Naive thymus-derived CD4-positive, alpha-beta T cell (primary cell): ENCODE measurements at regions of chr1 and their contacts with region 1.

Region 1: DNA sequence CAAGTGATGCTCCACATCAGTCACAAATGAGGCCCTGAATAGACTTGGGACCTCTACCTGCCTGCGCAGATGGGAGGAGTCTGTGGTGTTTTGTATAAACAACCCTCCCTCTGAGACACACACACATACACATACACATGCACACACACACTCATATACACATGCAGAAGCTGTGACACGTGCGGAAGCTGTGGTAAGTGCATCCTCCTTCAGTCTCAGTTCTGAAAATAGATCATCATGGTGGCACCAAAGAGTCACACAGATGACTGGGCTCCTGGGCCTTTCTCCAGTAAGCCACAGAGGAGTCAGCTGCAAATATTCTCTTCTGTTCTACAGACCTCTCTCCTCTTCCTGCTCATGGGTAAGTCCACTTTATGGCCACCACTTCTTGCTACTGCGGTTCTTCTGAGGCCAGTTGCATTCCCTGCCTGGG is at the start of gene LY9:
- DNase-seq: peak; percentile 28 to 97 (median 94)
- ATAC-seq: peak; percentile 96
- H3K4me3 ChIP-seq: peak within 1 kb of the TSS; percentile 66
- H3K4me3 Mint-ChIP-seq: peak within 1 kb of the TSS; percentile 86 to 99 (median 98)
- H3K27ac ChIP-seq: peak within 1 kb of the TSS; percentile 83
- H3K27ac Mint-ChIP-seq: peak within 1 kb of the TSS; percentile 91 to 99 (median 99)
- H3K4me1 ChIP-seq: peaks cover 22 to 29% of the 10 kb centered on the region in 2 donors
- H3K4me1 Mint-ChIP-seq: peaks cover 31 to 66% (median 48%) of the 10 kb centered on the region in 7 donors
- H3K27me3 ChIP-seq: no peaks in the 10 kb centered on the region
- H3K27me3 Mint-ChIP-seq: peaks cover 0 to 21% (median 0%) of the 10 kb centered on the region in 5 donors
- total RNA-seq, gene LY9: 5.6 to 141 (median 105) TPM

Region 2: GRCh38 chr1:160629286-160630210 is 166.4 kb before region 1 on chr1:
- CTCF ChIA-PET with region 1: no interaction called
- POLR2A ChIA-PET with region 1: no interaction called
- intact Hi-C with region 1: loop called in 1 of 2 experiments (anchors 2 kb)
- DNase-seq: peak; percentile 29 to 95 (median 93)
- ATAC-seq: peak; percentile 88
- H3K4me3 ChIP-seq: peak overlapping the region; percentile 56
- H3K4me3 Mint-ChIP-seq: peak overlapping the region; percentile 80 to 99 (median 86)
- H3K27ac ChIP-seq: peak overlapping the region; percentile 95
- H3K27ac Mint-ChIP-seq: peak overlapping the region; percentile 86 to 100 (median 100)
- H3K4me1 ChIP-seq: peaks cover 95 to 96% of the 10 kb centered on the region in 2 donors
- H3K4me1 Mint-ChIP-seq: peaks cover 72 to 100% (median 97%) of the 10 kb centered on the region in 7 donors
- H3K27me3 ChIP-seq: no peaks in the 10 kb centered on the region
- H3K27me3 Mint-ChIP-seq: no peaks in the 10 kb centered on the region

Region 3: GRCh38 chr1:160726498-160727315 is 69.3 kb before region 1 on chr1:
- CTCF ChIA-PET with region 1: interaction called, 8 read pairs
- POLR2A ChIA-PET with region 1: no interaction called
- intact Hi-C with region 1: loop called in 1 of 2 experiments (anchors 2 kb)
- DNase-seq: peak in 8 of 9 donors; percentile 57 to 80 (median 73)
- ATAC-seq: peak; percentile 97
- H3K4me3 ChIP-seq: no peak overlapping the region
- H3K4me3 Mint-ChIP-seq: no peak overlapping the region
- H3K27ac ChIP-seq: no peak overlapping the region
- H3K27ac Mint-ChIP-seq: no peak overlapping the region
- H3K4me1 ChIP-seq: peaks cover 15 to 21% of the 10 kb centered on the region in 2 donors
- H3K4me1 Mint-ChIP-seq: peaks cover 12 to 29% (median 16%) of the 10 kb centered on the region in 7 donors
- H3K27me3 ChIP-seq: no peaks in the 10 kb centered on the region
- H3K27me3 Mint-ChIP-seq: no peaks in the 10 kb centered on the region

Region 4: GRCh38 chr1:160777486-160778089 is 18.4 kb before region 1 on chr1:
- CTCF ChIA-PET with region 1: interaction called, 18 read pairs
- POLR2A ChIA-PET with region 1: interaction called, 8 read pairs
- intact Hi-C with region 1: loop called (anchors 1 kb)
- DNase-seq: peak in 7 of 9 donors; percentile 50 to 74 (median 68)
- ATAC-seq: peak; percentile 80
- H3K4me3 ChIP-seq: no peak overlapping the region
- H3K4me3 Mint-ChIP-seq: no peak overlapping the region
- H3K27ac ChIP-seq: no peak overlapping the region
- H3K27ac Mint-ChIP-seq: peak overlapping the region in 4 of 9 donors; percentile 17 to 80 (median 37)
- H3K4me1 ChIP-seq: peaks cover 0 to 11% of the 10 kb centered on the region in 2 donors
- H3K4me1 Mint-ChIP-seq: peaks cover 12 to 42% (median 15%) of the 10 kb centered on the region in 7 donors
- H3K27me3 ChIP-seq: no peaks in the 10 kb centered on the region
- H3K27me3 Mint-ChIP-seq: no peaks in the 10 kb centered on the region

Region 5: GRCh38 chr1:160813215-160813614 is 17.2 kb after region 1 on chr1:
- CTCF ChIA-PET with region 1: interaction called, 24 read pairs
- POLR2A ChIA-PET with region 1: interaction called, 19 read pairs
- intact Hi-C with region 1: no loop called
- DNase-seq: no peak
- ATAC-seq: peak; percentile 44
- H3K4me3 ChIP-seq: no peak overlapping the region
- H3K4me3 Mint-ChIP-seq: no peak overlapping the region
- H3K27ac ChIP-seq: no peak overlapping the region
- H3K27ac Mint-ChIP-seq: peak overlapping the region in 8 of 9 donors; percentile 44 to 86 (median 82)
- H3K4me1 ChIP-seq: peaks cover 0 to 12% of the 10 kb centered on the region in 2 donors
- H3K4me1 Mint-ChIP-seq: peaks cover 7 to 62% (median 54%) of the 10 kb centered on the region in 7 donors
- H3K27me3 ChIP-seq: no peaks in the 10 kb centered on the region
- H3K27me3 Mint-ChIP-seq: peaks cover 0 to 5% (median 0%) of the 10 kb centered on the region in 5 donors

Region 6: GRCh38 chr1:160862203-160863060 is 66.5 kb after region 1 on chr1 and contains the start of gene CD244:
- CTCF ChIA-PET with region 1: no interaction called
- POLR2A ChIA-PET with region 1: no interaction called
- intact Hi-C with region 1: no loop called
- DNase-seq: peak in 2 of 9 donors; percentile 21 to 56
- ATAC-seq: peak; percentile 90
- H3K4me3 ChIP-seq: peak within 1 kb of the TSS; percentile 51
- H3K4me3 Mint-ChIP-seq: peak within 1 kb of the TSS in 6 of 10 donors; percentile 9 to 77 (median 14)
- H3K27ac ChIP-seq: no peak within 1 kb of the TSS
- H3K27ac Mint-ChIP-seq: peak within 1 kb of the TSS in 4 of 9 donors; percentile 26 to 52 (median 45)
- H3K4me1 ChIP-seq: peaks cover 0 to 10% of the 10 kb centered on the region in 2 donors
- H3K4me1 Mint-ChIP-seq: peaks cover 5 to 38% (median 26%) of the 10 kb centered on the region in 7 donors
- H3K27me3 ChIP-seq: no peaks in the 10 kb centered on the region
- H3K27me3 Mint-ChIP-seq: peaks cover 0 to 7% (median 0%) of the 10 kb centered on the region in 5 donors
- total RNA-seq, gene CD244: 0.27 to 33.6 (median 0.46) TPM

Region 7: GRCh38 chr1:161117759-161118581 is 322.0 kb after region 1 on chr1 and contains the starts of genes NIT1 and PFDN2:
- CTCF ChIA-PET with region 1: no interaction called
- POLR2A ChIA-PET with region 1: no interaction called
- intact Hi-C with region 1: loop called in 1 of 2 experiments (anchors 5 kb)
- DNase-seq: peak; percentile 76 to 90 (median 85)
- ATAC-seq: peak; percentile 86
- H3K4me3 ChIP-seq: peak within 1 kb of the TSS; percentile 99
- H3K4me3 Mint-ChIP-seq: peak within 1 kb of the TSS; percentile 92 to 99 (median 95)
- H3K27ac ChIP-seq: peak within 1 kb of the TSS; percentile 92
- H3K27ac Mint-ChIP-seq: peak within 1 kb of the TSS; percentile 57 to 99 (median 93)
- H3K4me1 ChIP-seq: peaks cover 31 to 35% of the 10 kb centered on the region in 2 donors
- H3K4me1 Mint-ChIP-seq: peaks cover 44 to 82% (median 78%) of the 10 kb centered on the region in 7 donors
- H3K27me3 ChIP-seq: no peaks in the 10 kb centered on the region
- H3K27me3 Mint-ChIP-seq: no peaks in the 10 kb centered on the region
- total RNA-seq, gene NIT1: 23.3 to 49.6 (median 41.8) TPM
- total RNA-seq, gene PFDN2: 32.0 to 67.9 (median 34.0) TPM